Left colon (tissue), 2 donors: ENCODE measurements at regions of chr1 and their contacts with region 1.

Region 1: GRCh38 chr1:202009326-202010179 is 834 bp upstream of the ELF3 start:
- DNase-seq: peak; percentile 76 to 83
- ATAC-seq: peak; percentile 34

Region 2: GRCh38 chr1:201877877-201878401 is 131.6 kb before region 1 on chr1:
- intact Hi-C with region 1: no loop called
- DNase-seq: peak in 1 of 2 donors; percentile 26
- ATAC-seq: peak; percentile 75

Region 3: DNA sequence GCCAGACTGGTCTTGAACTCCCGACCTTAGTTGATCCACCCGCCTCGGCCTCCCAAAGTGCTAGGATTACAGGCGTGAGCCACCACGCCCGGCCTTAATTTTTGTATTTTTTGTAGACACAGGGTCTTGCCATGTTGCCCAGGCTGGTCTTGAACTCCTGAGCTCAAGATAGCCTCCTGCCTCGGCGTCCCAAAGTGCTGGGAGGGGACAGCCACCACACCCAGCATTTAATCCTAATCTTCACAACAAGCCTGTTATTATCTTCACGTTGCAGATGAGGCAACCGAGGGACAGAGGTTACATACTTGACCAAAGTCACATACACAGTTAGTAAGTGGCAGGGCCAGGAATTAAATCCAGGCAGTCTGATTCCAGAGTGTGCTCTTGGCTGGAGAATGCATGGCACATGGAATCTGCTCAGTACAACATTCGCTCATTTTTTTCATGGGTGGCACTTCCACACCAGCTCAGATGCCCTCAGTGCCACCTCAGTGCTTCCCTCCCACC is 108.4 kb after region 1 on chr1:
- intact Hi-C with region 1: loop called in 1 of 2 experiments (anchors 5 kb)
- DNase-seq: peak in 1 of 2 donors; percentile 37
- ATAC-seq: peak; percentile 52

Region 4: GRCh38 chr1:202135221-202135721 is 125.7 kb after region 1 on chr1:
- intact Hi-C with region 1: loop called (anchors 5 kb)
- DNase-seq: peak in 1 of 2 donors; percentile 46
- ATAC-seq: peak; percentile 79